ENCODE measurements at regions of chr15 and their contacts with region 1.

Region 1: DNA sequence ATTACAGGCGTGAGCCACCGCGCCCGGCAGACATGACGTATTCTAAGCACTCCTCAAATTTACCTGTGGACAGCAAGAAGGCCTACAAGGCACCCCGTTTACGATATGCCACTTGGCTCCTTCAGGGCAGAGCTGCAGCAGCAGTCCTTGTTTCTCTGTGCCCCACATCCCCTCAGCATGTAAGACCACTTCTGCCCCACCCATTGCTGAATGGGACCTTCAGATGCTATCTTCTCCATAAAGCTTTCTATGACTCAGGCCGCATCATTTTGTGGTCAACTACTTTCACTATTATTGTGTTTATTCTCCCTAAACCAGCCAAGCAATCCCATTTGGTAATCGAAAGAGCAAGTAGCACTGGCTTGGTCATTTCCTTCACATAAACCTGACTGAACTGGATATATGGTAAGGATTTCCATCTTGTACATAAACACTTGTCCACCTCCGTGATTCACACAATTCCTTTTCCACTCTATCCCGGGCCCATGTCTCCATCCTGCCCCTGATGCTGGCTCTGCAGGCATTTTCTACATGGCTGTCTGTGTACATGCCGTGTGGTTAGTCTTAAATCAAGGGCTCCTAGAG is 25.7 kb downstream of the LIPC start:
- DNase-seq: peak; percentile 55
- ATAC-seq: peak; percentile 68
- H3K4me3 Mint-ChIP-seq: no peak overlapping the region
- H3K27ac Mint-ChIP-seq: peak overlapping the region; percentile 24
- H3K4me1 Mint-ChIP-seq: peaks cover 53% of the 10 kb centered on the region
- H3K27me3 Mint-ChIP-seq: no peaks in the 10 kb centered on the region

Region 2: DNA sequence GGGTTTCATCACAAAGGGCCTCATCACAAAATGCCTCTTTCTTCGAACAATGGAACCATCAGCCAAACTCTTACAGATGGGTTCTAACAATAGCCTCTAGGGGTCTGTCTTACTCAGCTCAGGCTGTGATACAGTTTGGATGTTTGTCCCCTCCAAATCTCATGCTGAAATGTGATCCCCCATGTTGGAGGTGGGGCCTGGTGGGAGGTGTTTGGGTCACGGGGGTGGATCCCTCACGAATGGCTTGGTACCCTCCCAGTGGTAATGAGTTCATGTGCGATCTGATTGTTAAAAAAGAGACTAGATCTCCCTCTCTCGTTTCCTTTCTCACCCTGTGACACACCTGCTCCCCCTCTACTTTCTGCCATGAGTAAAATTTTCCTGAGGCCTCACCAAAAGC is 73.6 kb before region 1 on chr15:
- CTCF ChIA-PET with region 1: no interaction called
- POLR2A ChIA-PET with region 1: interaction called, 5 read pairs
- intact Hi-C with region 1: loop called in 1 of 2 experiments (anchors 1 kb)
- DNase-seq: peak; percentile 66
- ATAC-seq: peak; percentile 97
- H3K4me3 Mint-ChIP-seq: no peak overlapping the region
- H3K27ac Mint-ChIP-seq: peak overlapping the region; percentile 83
- H3K4me1 Mint-ChIP-seq: peaks cover 18% of the 10 kb centered on the region
- H3K27me3 Mint-ChIP-seq: no peaks in the 10 kb centered on the region

Region 3: GRCh38 chr15:58517682-58518525 is 60.4 kb after region 1 on chr15:
- CTCF ChIA-PET with region 1: no interaction called
- POLR2A ChIA-PET with region 1: no interaction called
- intact Hi-C with region 1: loop called (anchors 5 kb)
- DNase-seq: peak; percentile 35
- ATAC-seq: peak; percentile 17
- H3K4me3 Mint-ChIP-seq: no peak overlapping the region
- H3K27ac Mint-ChIP-seq: peak overlapping the region; percentile 40
- H3K4me1 Mint-ChIP-seq: peaks cover 51% of the 10 kb centered on the region
- H3K27me3 Mint-ChIP-seq: peaks cover 3% of the 10 kb centered on the region

Measured in activated CD4-positive, alpha-beta T cell treated with anti-CD3 and anti-CD28 coated beads for 36 hours (primary cell).